Activated CD4-positive, alpha-beta T cell treated with anti-CD3 and anti-CD28 coated beads for 36 hours (primary cell): ENCODE measurements at regions of chr22 and their contacts with region 1.

Region 1: DNA sequence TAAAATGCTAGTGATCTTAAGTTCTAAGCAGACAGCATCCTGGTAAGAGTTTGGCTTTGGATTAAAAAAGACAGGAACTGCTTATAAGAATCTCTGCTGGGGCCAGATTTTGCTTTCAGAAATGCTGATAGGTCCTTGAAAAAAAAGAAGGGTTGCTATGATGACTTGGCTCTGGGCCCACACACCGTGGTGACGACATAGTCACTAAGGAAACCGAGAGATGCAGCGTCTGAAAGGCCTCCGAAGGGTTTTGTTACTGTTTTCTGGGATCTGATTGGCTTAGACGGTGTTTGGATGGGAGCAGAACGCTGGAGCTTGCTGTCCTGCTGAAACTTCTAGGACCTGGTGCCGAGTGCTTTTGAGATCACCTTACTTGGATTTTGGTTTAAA is 8.4 kb downstream of the FAM118A start:
- DNase-seq: peak; percentile 95
- ATAC-seq: peak; percentile 79
- H3K4me3 Mint-ChIP-seq: peak overlapping the region; percentile 72
- H3K27ac Mint-ChIP-seq: peak overlapping the region; percentile 95
- H3K4me1 Mint-ChIP-seq: peaks cover 89% of the 10 kb centered on the region
- H3K27me3 Mint-ChIP-seq: no peaks in the 10 kb centered on the region

Region 2: DNA sequence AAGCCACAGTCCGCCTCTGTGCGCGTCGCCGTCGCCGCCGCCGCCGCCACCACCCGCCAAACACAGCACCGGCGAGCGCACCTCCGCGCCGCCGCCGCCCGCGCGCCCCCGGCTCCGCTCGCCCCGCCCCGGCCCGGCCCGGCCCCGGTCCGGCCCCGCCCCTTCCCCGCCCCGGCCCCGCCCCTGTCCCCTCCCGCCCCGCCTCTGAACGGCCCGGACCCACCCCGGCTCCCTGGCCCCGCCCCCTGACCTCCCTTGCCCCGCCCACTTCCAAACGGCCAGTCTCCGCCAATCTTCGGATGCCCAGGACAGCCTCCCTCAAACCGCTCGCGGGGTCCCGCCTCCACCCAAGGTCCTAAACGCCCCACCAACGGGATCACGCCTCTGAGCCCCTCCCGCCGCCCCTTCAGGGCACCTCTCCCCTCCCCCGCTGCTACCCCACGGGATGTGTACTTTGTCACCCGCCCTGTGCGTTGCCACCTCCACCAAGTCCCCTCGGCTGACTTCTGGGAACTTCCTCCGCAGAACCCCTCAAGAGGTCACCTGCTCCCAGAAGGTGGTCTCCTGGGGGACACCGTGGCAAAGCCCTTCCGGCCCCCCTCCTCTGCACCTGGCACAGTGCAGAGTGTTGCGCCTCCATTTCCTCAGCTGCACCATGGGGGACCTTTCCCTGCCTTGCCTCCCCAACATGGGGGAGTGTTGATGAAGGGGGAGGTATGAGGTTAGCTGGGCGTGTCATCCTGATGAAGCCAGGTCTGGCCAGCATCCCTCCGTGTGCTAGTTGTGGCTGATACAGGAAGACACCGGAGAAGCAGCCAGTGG is 77.1 kb before region 1 on chr22 and contains the start of gene KIAA0930:
- CTCF ChIA-PET with region 1: no interaction called
- POLR2A ChIA-PET with region 1: no interaction called
- intact Hi-C with region 1: loop called in 1 of 2 experiments (anchors 2 kb)
- DNase-seq: peak; percentile 91
- ATAC-seq: peak; percentile 69
- H3K4me3 Mint-ChIP-seq: peak within 1 kb of the TSS; percentile 89
- H3K27ac Mint-ChIP-seq: peak within 1 kb of the TSS; percentile 78
- H3K4me1 Mint-ChIP-seq: peaks cover 10% of the 10 kb centered on the region
- H3K27me3 Mint-ChIP-seq: no peaks in the 10 kb centered on the region
- total RNA-seq, gene KIAA0930: 24.8 to 29.6 TPM

Region 3: GRCh38 chr22:45284705-45285262 is 33.4 kb before region 1 on chr22 and contains the start of gene UPK3A:
- CTCF ChIA-PET with region 1: no interaction called
- POLR2A ChIA-PET with region 1: no interaction called
- intact Hi-C with region 1: loop called in 1 of 2 experiments (anchors 5 kb)
- DNase-seq: peak; percentile 80
- ATAC-seq: peak; percentile 97
- H3K4me3 Mint-ChIP-seq: no peak within 1 kb of the TSS
- H3K27ac Mint-ChIP-seq: no peak within 1 kb of the TSS
- H3K4me1 Mint-ChIP-seq: peaks cover 20% of the 10 kb centered on the region
- H3K27me3 Mint-ChIP-seq: peaks cover 8% of the 10 kb centered on the region
- total RNA-seq, gene UPK3A: not detected

Region 4: DNA sequence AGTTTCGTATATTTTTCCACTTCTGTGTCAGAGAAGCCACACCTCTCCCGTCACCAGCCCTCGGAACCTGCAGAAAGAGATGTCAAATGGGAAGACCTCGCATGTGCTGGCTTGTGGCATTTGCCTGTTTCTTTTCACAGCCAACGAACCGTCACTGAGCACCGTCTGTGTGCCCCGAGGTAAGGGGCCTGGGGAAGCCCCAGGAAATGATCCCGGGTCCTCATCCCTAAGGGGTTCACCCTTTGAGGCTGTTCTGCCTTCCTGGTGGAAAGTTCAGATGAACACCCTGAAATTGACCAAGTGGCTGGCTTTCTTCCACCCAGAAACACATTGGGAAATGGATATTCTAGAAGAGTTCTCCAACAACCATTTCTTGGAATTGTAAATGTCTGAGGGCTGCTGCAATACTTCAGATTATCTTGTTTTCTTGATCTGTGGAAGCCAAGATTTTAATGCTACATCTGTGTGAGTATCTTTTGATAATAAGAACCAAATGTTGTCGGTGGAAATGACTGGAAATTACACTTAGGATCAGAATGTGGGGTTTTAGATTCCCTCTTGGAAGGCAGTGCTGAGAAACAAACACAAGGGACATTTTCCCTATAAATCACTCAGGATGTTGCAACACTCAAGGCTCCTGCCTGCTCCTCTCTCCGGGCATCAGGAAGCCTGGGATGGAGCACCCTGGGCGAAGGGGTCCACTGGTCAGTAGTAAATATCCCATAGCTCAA is 132.9 kb after region 1 on chr22:
- CTCF ChIA-PET with region 1: no interaction called
- POLR2A ChIA-PET with region 1: no interaction called
- intact Hi-C with region 1: no loop called
- DNase-seq: no peak
- ATAC-seq: no peak
- H3K4me3 Mint-ChIP-seq: no peak overlapping the region
- H3K27ac Mint-ChIP-seq: no peak overlapping the region
- H3K4me1 Mint-ChIP-seq: no peaks in the 10 kb centered on the region
- H3K27me3 Mint-ChIP-seq: no peaks in the 10 kb centered on the region